Heart left ventricle (tissue), 16 donors: ENCODE measurements at regions of chr4 and their contacts with region 1.

Region 1: DNA sequence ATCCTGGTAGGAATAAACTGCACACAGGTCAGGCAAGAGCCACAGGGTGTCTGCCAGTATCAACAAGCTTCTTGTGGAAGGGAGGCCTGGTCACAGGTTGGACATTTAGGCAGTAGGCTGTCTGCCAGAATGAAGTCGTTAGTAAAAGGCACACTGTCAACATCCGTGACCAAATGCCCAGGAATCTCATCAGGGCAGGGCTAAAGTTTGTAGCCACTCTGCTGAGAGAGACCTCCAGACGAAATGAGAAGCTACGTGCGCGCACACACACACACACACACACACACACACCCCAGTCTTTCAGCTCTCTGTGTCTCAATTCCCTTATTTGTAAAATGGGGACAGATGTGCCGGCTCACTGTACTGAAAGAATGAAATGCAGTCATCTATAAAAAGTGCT is 408.7 kb upstream of the ZFP42 start:
- DNase-seq: no peak
- ATAC-seq: no peak
- H3K4me3 ChIP-seq: no peak overlapping the region
- H3K27ac ChIP-seq: no peak overlapping the region
- H3K4me1 ChIP-seq: no peaks in the 10 kb centered on the region
- H3K27me3 ChIP-seq: peaks cover 0 to 5% (median 0%) of the 10 kb centered on the region in 9 donors
- CTCF ChIP-seq: no peak
- POLR2A ChIP-seq: no peak

Region 2: DNA sequence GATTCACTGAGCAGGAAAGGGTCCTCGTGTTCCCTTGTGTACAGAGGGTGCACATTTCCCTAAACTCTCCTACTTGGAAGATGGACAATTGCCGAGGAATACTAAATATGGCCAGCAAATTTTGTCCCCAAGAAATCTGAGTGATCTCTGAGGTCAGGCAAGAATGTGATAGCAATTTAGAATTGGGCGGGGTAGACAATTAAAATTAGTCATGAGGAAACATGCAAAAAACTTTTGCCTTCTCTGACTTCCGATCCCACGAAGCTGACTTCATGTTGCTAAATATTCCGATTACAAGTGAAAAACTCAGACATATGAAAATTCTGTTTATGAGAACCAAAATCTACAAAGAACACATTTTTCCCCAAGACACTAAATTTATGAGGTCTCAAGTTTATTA is 45.2 kb before region 1 on chr4:
- intact Hi-C with region 1: loop called in 1 of 10 experiments (anchors 2 kb)
- DNase-seq: no peak
- ATAC-seq: no peak
- H3K4me3 ChIP-seq: no peak overlapping the region
- H3K27ac ChIP-seq: no peak overlapping the region
- H3K4me1 ChIP-seq: no peaks in the 10 kb centered on the region
- H3K27me3 ChIP-seq: no peaks in the 10 kb centered on the region
- CTCF ChIP-seq: no peak
- POLR2A ChIP-seq: no peak

Region 3: DNA sequence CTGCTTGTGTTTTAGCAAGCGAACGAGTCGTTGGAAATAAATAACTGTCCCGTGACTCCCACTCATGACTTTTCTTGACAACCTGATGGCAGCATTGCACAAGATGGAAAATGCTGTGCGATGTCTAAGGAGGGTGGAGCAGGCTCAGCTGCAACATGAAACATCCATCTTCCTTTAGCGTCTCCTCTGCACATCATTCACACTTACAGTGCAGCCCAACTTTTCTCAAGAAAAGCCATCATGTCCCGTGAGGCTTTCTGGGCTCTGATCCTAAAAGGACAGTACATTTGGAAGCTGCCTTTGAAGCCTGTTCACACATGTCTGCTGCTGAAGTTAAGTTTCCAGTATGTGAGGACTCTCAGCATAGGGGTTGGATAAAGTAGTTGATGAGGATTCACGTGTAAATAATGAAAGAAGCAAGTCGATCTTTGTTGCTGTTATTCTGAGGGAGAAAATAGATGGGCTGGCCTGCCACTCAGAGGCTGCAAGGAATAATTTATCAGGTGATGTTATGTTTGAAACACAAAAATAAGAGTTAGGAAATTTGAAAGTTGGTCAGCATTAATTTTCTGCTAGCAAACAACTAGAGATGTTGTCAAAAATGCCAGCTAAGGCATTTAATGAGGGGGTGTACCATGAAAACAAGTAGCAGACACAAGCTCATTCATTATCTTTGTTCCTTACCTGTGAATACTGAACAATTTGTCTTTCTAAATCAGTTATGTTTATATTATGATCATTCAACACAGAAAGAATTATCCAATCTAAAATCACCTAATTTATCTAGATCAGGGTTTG is 80.0 kb after region 1 on chr4:
- intact Hi-C with region 1: no loop called
- DNase-seq: no peak
- ATAC-seq: peak in 1 of 4 donors; percentile 11
- H3K4me3 ChIP-seq: no peak overlapping the region
- H3K27ac ChIP-seq: no peak overlapping the region
- H3K4me1 ChIP-seq: no peaks in the 10 kb centered on the region
- H3K27me3 ChIP-seq: no peaks in the 10 kb centered on the region
- CTCF ChIP-seq: peak in 1 of 12 donors; percentile 5
- POLR2A ChIP-seq: no peak